Heart right ventricle (tissue), 16 donors: ENCODE measurements at regions of chr15 and their contacts with region 1.

Region 1: GRCh38 chr15:77966540-77967290 is 110.8 kb downstream of the TBC1D2B start:
- DNase-seq: peak in 1 of 2 donors; percentile 58
- ATAC-seq: peak; percentile 66 to 88 (median 80)
- H3K4me3 ChIP-seq: no peak overlapping the region
- H3K27ac ChIP-seq: no peak overlapping the region
- H3K4me1 ChIP-seq: peaks cover 0 to 7% (median 0%) of the 10 kb centered on the region in 9 donors
- H3K27me3 ChIP-seq: no peaks in the 10 kb centered on the region
- CTCF ChIP-seq: peak; percentile 75 to 91 (median 85)

Region 2: DNA sequence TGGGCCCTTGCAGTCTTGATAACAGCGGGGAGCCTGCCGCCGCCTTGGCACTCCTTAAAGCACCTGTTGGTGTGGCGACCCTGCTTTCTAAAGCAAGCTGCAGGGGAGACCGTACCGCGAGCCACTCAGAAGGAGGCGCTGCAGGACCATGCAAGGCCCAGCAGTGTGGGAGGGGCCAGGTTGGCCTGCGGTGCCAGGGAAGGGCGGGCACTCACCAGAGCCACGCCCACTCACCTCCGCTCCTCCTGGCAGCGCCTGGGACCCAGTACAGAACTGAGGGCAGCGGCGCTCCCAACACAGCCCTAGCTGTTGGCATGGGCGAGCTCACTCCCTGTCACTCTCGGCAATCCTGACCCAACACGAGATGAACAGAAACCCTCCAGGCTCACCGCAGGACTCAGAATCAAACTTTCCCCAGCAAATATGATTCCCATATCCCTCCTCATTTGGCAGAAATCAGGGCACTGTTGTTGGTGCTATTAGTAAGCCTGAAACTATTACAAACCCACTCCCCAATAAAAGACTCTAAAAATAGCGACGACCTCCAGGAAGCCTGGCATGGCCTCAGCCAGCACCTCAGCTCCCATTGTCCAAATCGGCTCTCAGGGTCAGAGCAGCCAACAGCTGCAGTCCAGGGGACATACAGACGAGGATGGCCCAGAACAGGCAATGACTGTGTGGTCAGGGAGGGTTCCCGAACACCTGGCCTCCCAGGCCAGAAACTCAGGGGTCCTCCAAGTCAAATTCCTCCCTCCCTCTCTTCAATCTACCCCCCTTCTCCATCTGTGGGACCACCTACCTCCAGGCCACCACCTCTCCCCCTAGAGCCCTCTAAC is 33.6 kb after region 1 on chr15:
- intact Hi-C with region 1: loop called in 4 of 10 experiments (anchors 5 kb)
- DNase-seq: peak; percentile 57 to 74
- ATAC-seq: peak; percentile 43 to 77 (median 60)
- H3K4me3 ChIP-seq: no peak overlapping the region
- H3K27ac ChIP-seq: no peak overlapping the region
- H3K4me1 ChIP-seq: peaks cover 9 to 45% (median 25%) of the 10 kb centered on the region in 9 donors
- H3K27me3 ChIP-seq: no peaks in the 10 kb centered on the region
- CTCF ChIP-seq: peak in 8 of 9 donors; percentile 37 to 62 (median 54)